ENCODE measurements at regions of chr1 and their contacts with region 1.

Region 1: DNA sequence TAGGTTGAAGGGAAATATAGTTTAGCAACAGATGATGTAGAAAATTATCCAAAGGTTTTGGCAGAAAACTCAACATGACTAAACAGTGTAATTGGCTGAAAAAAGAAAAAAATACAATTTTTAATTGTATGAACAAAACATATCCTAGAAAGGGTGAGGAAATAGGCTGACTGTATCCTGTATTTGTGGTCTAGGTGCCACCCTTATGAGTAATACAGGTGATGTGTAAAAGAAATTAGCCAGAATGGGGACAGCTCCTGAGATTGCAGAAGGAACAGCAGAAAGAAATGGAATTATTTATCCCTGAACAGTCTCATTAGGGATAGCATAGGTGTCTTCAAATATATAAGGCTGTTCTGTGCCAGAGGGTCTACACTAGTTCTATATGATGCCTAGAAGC is 24.6 kb downstream of the DNASE2B start:
- DNase-seq: peak; percentile 67
- H3K4me3 ChIP-seq: no peak overlapping the region
- H3K27ac ChIP-seq: no peak overlapping the region
- H3K4me1 ChIP-seq: peaks cover 12% of the 10 kb centered on the region
- H3K27me3 ChIP-seq: no peaks in the 10 kb centered on the region
- CTCF ChIP-seq: no peak

Region 2: DNA sequence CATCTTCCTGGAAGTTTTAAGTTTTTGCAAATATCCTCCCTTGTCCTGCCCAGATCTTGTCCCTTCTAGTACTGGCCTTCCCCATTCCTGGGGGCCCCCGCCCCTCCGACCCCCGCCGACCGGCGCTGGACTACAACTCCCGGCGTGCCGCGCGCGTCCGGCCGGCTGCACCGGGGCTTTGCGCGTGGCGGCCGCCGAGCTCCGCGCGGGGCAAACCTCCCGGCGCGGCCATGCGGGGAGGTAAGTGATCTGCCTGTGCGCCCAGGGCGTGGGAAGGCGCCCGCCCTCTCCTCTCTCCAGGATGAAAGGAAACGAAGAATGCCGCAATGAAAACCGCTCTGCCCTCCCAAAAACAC is 124.6 kb before region 1 on chr1:
- CTCF ChIA-PET with region 1: interaction called, 3 read pairs
- dilution Hi-C with region 1: no loop called
- in situ Hi-C with region 1: no loop called
- intact Hi-C with region 1: loop called (anchors 2 kb)
- DNase-seq: peak; percentile 7
- H3K4me3 ChIP-seq: peak overlapping the region; percentile 81 to 93 (median 92)
- H3K27ac ChIP-seq: no peak overlapping the region
- H3K4me1 ChIP-seq: peaks cover 37% of the 10 kb centered on the region
- H3K27me3 ChIP-seq: no peaks in the 10 kb centered on the region
- CTCF ChIP-seq: no peak

Region 3: GRCh38 chr1:84452436-84452835 is 29.5 kb after region 1 on chr1:
- CTCF ChIA-PET with region 1: no interaction called
- dilution Hi-C with region 1: no loop called
- in situ Hi-C with region 1: no loop called
- intact Hi-C with region 1: no loop called
- DNase-seq: no peak
- H3K4me3 ChIP-seq: no peak overlapping the region
- H3K27ac ChIP-seq: no peak overlapping the region
- H3K4me1 ChIP-seq: no peaks in the 10 kb centered on the region
- H3K27me3 ChIP-seq: peaks cover 2% of the 10 kb centered on the region
- CTCF ChIP-seq: no peak